ENCODE measurements at regions of chr12 and their contacts with region 1.

Region 1: GRCh38 chr12:53054112-53054833 is 4.4 kb downstream of the TNS2 start:
- DNase-seq: peak; percentile 90
- H3K4me3 ChIP-seq: peak overlapping the region in 2 of 3 experiments; percentile 16 to 37
- H3K27ac ChIP-seq: no peak overlapping the region
- H3K4me1 ChIP-seq: peaks cover 42% of the 10 kb centered on the region
- H3K27me3 ChIP-seq: no peaks in the 10 kb centered on the region
- CTCF ChIP-seq: no peak
- POLR2A ChIP-seq: peak; percentile 60

Region 2: GRCh38 chr12:53039851-53040250 is 14.4 kb before region 1 on chr12:
- CTCF ChIA-PET with region 1: interaction called, 40 read pairs
- POLR2A ChIA-PET with region 1: interaction called, 4 read pairs
- dilution Hi-C with region 1: no loop called
- intact Hi-C with region 1: no loop called
- DNase-seq: no peak
- H3K4me3 ChIP-seq: no peak overlapping the region
- H3K27ac ChIP-seq: no peak overlapping the region
- H3K4me1 ChIP-seq: peaks cover 30% of the 10 kb centered on the region
- H3K27me3 ChIP-seq: no peaks in the 10 kb centered on the region
- CTCF ChIP-seq: no peak
- POLR2A ChIP-seq: no peak

Region 3: GRCh38 chr12:53079226-53080117 is 25.2 kb after region 1 on chr12 and contains the start of gene SPRYD3:
- CTCF ChIA-PET with region 1: no interaction called
- POLR2A ChIA-PET with region 1: interaction called, 3 read pairs
- dilution Hi-C with region 1: no loop called
- intact Hi-C with region 1: loop called (anchors 1 kb)
- DNase-seq: peak; percentile 98
- H3K4me3 ChIP-seq: peak within 1 kb of the TSS; percentile 68 to 87 (median 80)
- H3K27ac ChIP-seq: peak within 1 kb of the TSS; percentile 52
- H3K4me1 ChIP-seq: peaks cover 9% of the 10 kb centered on the region
- H3K27me3 ChIP-seq: no peaks in the 10 kb centered on the region
- CTCF ChIP-seq: no peak
- POLR2A ChIP-seq: peak; percentile 98
- total RNA-seq, gene SPRYD3: 31.7 and 39.2 TPM in 2 replicates